ENCODE measurements at regions of chr9 and their contacts with region 1.

Region 1: DNA sequence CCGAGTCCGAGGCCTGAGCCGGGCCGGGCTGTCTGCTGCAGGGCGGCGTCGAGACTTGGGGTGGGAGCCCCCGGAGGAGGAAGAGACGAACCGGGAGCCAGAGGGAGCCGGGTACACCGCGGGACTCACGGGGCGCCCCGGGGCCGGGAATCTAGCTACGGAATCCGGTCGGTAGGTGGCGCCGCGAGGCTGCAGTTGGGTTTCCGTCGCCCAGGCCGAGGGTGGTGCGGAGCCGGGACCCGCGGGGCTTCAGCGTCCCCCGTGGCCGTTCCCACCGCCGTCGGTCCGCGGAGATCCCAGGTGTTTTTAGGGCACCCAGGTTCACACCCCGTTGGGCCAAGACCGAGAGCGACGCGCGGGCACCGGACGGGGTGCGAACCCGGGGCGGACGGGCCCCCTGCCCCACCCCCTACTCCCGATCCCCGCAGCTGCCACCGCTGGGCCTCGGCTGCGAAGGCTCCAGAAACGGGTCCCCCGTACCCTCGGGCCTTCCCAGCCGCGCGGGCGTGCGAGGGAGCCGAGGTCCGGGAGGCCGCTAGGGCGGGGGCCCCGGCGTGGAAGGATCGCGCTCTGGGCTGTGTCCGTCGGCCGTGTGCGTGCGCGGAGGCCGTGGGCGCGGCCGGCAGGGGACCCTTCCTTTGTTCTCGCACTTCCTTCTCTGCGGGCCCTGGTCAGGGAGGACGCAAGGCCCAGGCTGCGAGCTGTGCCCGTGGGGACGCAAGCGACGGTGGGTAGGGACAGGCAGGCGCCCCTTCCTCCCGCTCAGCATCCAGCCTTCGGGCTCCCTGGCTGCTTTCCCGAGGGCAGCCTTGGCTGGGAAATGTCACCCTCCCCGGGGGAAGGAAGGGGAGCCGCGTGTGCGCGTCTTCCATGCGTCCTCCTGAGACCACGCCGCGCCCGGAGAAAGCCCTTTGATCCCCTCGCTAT is 146.6 kb downstream of the GAPVD1 start:
- DNase-seq: peak; percentile 73
- H3K4me3 Mint-ChIP-seq: peak overlapping the region; percentile 57
- H3K27ac Mint-ChIP-seq: no peak overlapping the region
- H3K4me1 Mint-ChIP-seq: peaks cover 9% of the 10 kb centered on the region
- H3K27me3 Mint-ChIP-seq: peaks cover 14% of the 10 kb centered on the region
- CTCF ChIP-seq: peak; percentile 95

Region 2: DNA sequence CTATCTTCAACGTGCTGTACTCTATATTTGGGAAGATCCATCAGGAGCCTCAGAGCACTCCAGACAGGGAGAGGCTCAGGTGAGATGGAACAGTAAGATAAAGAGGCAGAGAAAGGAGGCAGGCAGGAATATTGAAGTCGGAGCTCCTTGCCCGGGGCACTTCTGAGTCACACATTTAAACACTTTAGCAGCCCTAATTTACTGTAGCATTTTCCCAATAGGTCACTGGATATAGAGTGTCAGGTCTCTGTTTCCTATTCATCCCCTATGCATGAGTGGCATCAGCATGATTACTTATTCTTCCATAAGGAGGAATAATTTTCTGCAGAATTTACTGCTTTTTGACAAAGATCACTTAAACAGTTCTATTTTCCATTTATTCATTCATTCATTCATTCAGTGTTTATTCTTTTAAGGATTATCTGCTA is 128.0 kb after region 1 on chr9:
- CTCF ChIA-PET with region 1: interaction called, 10 read pairs
- POLR2A ChIA-PET with region 1: interaction called, 3 read pairs
- intact Hi-C with region 1: no loop called
- DNase-seq: peak; percentile 65
- H3K4me3 Mint-ChIP-seq: no peak overlapping the region
- H3K27ac Mint-ChIP-seq: no peak overlapping the region
- H3K4me1 Mint-ChIP-seq: peaks cover 29% of the 10 kb centered on the region
- H3K27me3 Mint-ChIP-seq: no peaks in the 10 kb centered on the region
- CTCF ChIP-seq: no peak

Region 3: GRCh38 chr9:126301985-126302603 is 893.9 kb after region 1 on chr9:
- CTCF ChIA-PET with region 1: no interaction called
- POLR2A ChIA-PET with region 1: interaction called, 3 read pairs
- intact Hi-C with region 1: loop called (anchors 1 kb)
- DNase-seq: peak; percentile 64
- H3K4me3 Mint-ChIP-seq: no peak overlapping the region
- H3K27ac Mint-ChIP-seq: no peak overlapping the region
- H3K4me1 Mint-ChIP-seq: no peaks in the 10 kb centered on the region
- H3K27me3 Mint-ChIP-seq: peaks cover 11% of the 10 kb centered on the region
- CTCF ChIP-seq: peak; percentile 66

Region 4: GRCh38 chr9:126398403-126399058 is 990.3 kb after region 1 on chr9:
- CTCF ChIA-PET with region 1: interaction called, 24 read pairs
- POLR2A ChIA-PET with region 1: interaction called, 3 read pairs
- intact Hi-C with region 1: loop called (anchors 2 kb)
- DNase-seq: peak; percentile 68
- H3K4me3 Mint-ChIP-seq: no peak overlapping the region
- H3K27ac Mint-ChIP-seq: no peak overlapping the region
- H3K4me1 Mint-ChIP-seq: no peaks in the 10 kb centered on the region
- H3K27me3 Mint-ChIP-seq: no peaks in the 10 kb centered on the region
- CTCF ChIP-seq: peak; percentile 94